ENCODE measurements at regions of chr19 and their contacts with region 1.

Region 1: DNA sequence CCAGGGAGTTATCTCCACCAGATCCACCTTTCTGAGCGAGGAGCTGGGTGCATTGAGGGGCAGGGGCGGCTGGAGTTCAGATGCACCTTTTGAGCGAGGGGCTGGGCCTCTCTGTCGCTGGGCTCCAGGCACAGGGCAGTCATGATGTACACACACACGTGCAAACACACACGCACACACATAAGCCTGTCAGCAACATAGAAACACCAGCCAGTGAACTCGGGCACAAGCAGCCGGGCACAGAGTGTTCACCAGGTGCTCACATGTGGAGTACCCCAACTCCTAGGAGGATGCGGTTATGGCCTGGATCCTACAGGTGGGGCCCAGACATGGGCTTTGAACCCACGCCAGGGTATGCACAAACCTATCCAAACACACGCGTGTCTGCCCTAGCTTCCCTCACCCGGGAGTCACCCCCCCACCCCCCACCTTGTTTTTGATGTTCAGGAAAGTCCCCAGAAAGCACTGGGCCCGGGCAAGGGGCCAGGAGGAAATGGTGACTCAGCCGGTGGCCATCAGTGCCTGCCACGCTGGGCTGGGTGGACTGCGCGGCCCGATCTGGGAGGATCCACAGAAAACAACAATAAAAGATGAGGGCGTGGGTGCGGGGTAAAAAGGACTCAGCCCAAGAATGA is 13.3 kb downstream of the ARRDC2 start:
- DNase-seq: peak; percentile 92
- ATAC-seq: peak; percentile 10 to 13
- H3K4me3 ChIP-seq: peak overlapping the region in 3 of 4 donors; percentile 18 to 54 (median 30)
- H3K27ac ChIP-seq: peak overlapping the region; percentile 89 to 100 (median 95)
- H3K4me1 ChIP-seq: peaks cover 68 to 75% of the 10 kb centered on the region in 2 donors
- H3K27me3 ChIP-seq: no peaks in the 10 kb centered on the region
- CTCF ChIP-seq: peak in 1 of 5 experiments; percentile 34
- POLR2A ChIP-seq: peak in 1 of 2 donors; percentile 60

Region 2: DNA sequence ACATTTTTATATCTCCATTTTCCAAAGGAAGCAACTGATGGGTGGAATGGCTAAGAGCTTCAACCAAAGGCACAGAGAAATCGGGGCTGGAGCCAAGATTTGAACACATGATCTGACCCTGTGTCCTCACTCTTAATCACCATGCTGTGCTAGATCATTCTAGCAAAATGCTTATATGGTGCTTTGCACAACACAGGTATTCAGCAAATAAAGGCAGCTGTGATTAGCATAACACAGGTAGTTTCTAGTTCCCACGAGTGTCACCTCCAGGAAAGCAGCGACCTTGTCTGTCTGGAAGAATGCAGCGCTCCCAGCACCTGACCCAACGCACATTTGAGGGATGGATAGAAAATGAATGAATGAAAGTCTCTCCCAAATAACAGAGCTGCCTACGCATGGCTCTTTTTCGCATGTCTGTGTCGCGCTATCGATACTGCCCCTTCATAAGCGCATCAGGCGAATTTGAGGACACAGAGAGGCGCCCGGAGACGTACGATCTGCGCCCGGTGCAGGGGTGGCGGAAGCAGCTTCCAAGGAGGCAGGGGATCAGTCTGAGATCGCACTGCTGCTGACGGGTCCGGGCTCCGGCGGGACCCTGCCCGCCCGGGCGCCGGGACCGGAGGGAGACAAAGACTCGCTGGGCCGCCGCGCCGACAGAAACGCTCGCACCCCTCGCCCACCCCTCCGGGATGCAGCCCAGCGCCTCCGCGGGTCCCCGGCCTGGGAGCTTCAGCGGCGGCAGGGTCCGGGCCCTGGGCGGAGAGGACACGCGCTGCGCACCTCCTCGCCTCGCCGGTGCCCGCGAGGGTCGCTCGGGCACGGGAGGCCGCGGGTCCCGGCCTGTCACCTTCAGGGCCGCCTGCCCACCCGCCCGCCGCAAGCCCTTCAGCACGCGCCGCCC is 1550.1 kb before region 1 on chr19:
- in situ Hi-C with region 1: loop called in 2 of 4 experiments (anchors 25 kb)
- intact Hi-C with region 1: loop called (anchors 5 kb)
- DNase-seq: peak in 1 of 2 donors; percentile 67
- ATAC-seq: peak; percentile 28 to 44
- H3K4me3 ChIP-seq: peak overlapping the region; percentile 70 to 84 (median 77)
- H3K27ac ChIP-seq: peak overlapping the region; percentile 91 to 99 (median 96)
- H3K4me1 ChIP-seq: peaks cover 48 to 55% of the 10 kb centered on the region in 2 donors
- H3K27me3 ChIP-seq: no peaks in the 10 kb centered on the region
- CTCF ChIP-seq: no peak
- POLR2A ChIP-seq: peak; percentile 24 to 35

Region 3: GRCh38 chr19:16671652-16672274 is 1349.5 kb before region 1 on chr19:
- in situ Hi-C with region 1: no loop called
- intact Hi-C with region 1: loop called (anchors 5 kb)
- DNase-seq: peak; percentile 91 to 97
- ATAC-seq: peak; percentile 87
- H3K4me3 ChIP-seq: no peak overlapping the region
- H3K27ac ChIP-seq: peak overlapping the region; percentile 100
- H3K4me1 ChIP-seq: peaks cover 44 to 52% of the 10 kb centered on the region in 2 donors
- H3K27me3 ChIP-seq: no peaks in the 10 kb centered on the region
- CTCF ChIP-seq: peak in 1 of 5 experiments; percentile 19
- POLR2A ChIP-seq: peak; percentile 58 to 75

Region 4: DNA sequence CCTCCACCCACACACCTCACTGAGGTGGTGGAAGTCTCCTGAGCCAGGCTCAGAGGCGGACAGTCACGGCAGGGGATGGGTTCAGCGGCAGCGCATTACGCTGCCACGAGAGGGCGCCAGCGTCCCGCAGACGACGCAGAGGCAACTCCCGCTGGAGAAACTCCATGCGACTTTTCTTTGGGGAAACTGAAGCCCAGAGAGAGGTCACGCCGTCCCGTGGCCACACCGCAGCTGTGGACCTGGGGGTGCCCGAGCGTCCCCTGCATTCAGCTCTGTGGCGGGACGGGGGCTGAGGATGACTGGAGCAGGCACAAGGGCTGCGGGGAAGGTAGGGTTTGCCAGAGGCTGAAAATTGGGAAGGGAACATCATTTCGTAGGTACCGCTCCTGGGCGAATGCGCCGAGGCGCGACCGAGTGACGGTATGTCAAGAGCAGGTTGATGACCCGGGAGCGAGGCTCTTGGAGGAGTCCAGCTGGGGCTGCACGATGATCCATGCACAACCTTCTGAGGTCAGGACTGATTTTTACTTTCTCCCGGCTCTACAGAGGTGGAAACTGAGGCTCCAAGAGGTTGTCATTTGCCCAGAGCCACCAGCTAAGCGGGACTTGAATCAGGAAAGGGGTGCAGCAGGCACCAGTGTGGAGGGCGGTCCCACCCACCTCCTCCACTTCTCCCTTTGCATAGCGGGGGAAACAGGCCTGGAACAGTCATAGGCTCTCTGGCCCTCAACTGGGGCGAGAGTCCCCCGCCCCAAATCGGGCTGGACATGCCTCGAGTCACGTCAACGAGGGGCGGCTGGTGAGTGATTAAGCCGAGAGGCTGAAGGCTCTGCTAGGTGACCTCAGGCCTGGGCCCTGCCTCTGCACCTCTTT is 14.0 kb before region 1 on chr19:
- in situ Hi-C with region 1: no loop called
- intact Hi-C with region 1: no loop called
- DNase-seq: peak; percentile 81 to 84
- ATAC-seq: peak; percentile 61 to 74
- H3K4me3 ChIP-seq: peak overlapping the region; percentile 74 to 99 (median 83)
- H3K27ac ChIP-seq: peak overlapping the region; percentile 89 to 100 (median 95)
- H3K4me1 ChIP-seq: peaks cover under 1 to 12% of the 10 kb centered on the region in 2 donors
- H3K27me3 ChIP-seq: peaks cover 0 to 2% (median 0%) of the 10 kb centered on the region in 3 donors
- CTCF ChIP-seq: peak; percentile 97 to 100 (median 99)
- POLR2A ChIP-seq: peak; percentile 76 to 90

Region 5: GRCh38 chr19:19063183-19064097 is 1042.2 kb after region 1 on chr19 and contains the start of gene SLC25A42:
- in situ Hi-C with region 1: no loop called
- intact Hi-C with region 1: loop called (anchors 10 kb)
- DNase-seq: peak; percentile 99 to 100
- ATAC-seq: peak; percentile 71 to 84
- H3K4me3 ChIP-seq: peak within 1 kb of the TSS; percentile 70 to 85 (median 78)
- H3K27ac ChIP-seq: peak within 1 kb of the TSS; percentile 94 to 96 (median 94)
- H3K4me1 ChIP-seq: peaks cover 78% of the 10 kb centered on the region in 2 donors
- H3K27me3 ChIP-seq: no peaks in the 10 kb centered on the region
- CTCF ChIP-seq: peak in 1 of 5 experiments; percentile 10
- POLR2A ChIP-seq: peak; percentile 96 to 97
- total RNA-seq, gene SLC25A42: 12.3 to 85.3 (median 37.1) TPM